ENCODE measurements at regions of chr1 and their contacts with region 1.

Region 1: DNA sequence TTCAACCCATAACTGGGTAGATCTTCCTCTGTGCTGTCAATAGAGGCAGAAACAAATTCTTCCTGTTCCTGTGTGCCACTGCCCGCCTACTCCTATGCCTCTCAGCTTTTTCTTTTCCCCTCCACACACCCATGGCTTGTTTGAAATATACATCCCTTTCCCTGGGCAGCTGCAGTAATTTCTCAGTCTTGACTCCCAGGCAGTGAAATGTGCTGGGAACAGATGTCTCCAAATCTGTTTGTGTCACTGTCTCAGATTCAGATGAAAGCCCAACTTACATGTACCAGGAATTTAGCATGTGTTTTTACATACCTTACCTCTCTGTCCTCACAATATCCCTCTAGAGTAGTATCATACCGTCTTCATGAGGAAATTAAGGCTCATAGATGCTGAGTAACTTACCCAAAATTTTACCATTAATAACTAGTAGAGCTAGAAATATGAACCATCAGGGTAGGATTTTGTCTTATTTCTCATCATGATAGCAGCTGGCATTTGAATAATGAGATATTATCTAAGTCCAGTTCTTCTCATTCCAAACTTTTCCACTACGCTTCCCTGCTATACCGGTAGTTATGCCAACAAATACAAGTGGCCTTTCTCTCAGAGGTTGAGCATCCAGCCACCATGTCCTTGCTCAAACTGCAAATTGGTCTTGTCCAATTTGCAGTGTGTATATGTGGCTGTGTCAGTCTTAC is 4.7 kb upstream of the VASH2 start:
- DNase-seq: no peak
- H3K4me3 ChIP-seq: no peak overlapping the region
- CTCF ChIP-seq: no peak
- POLR2A ChIP-seq: no peak

Region 2: GRCh38 chr1:212903664-212904063 is 41.9 kb before region 1 on chr1:
- intact Hi-C with region 1: loop called (anchors 1 kb)
- DNase-seq: no peak
- H3K4me3 ChIP-seq: no peak overlapping the region
- CTCF ChIP-seq: no peak
- POLR2A ChIP-seq: no peak